ENCODE measurements at regions of chr16 and their contacts with region 1.

Region 1: GRCh38 chr16:66588981-66589713 is 9.9 kb downstream of the CMTM2 start:
- DNase-seq: peak; percentile 81
- CTCF ChIP-seq: peak; percentile 98

Region 2: DNA sequence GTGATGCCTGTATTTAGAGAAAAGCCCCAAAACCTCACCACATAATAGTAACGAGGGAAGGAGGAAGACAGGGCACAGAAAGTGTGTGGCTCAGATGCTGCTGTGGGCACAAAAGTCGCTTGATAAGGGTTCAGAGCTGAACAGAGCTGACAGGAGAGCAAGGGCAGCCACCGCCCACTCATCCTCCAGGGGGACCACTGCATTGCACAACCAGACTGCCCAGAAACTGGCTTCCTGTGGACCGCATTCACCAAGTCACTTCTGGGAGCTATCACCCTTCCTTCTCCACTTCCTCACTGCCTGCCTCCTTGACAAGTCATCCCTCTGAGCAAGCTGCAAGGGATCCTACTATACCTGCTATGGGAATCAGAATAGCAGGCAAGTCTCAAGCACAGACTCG is 954.9 kb before region 1 on chr16:
- CTCF ChIA-PET with region 1: no interaction called
- POLR2A ChIA-PET with region 1: no interaction called
- DNase-seq: no peak
- CTCF ChIP-seq: no peak

Region 3: DNA sequence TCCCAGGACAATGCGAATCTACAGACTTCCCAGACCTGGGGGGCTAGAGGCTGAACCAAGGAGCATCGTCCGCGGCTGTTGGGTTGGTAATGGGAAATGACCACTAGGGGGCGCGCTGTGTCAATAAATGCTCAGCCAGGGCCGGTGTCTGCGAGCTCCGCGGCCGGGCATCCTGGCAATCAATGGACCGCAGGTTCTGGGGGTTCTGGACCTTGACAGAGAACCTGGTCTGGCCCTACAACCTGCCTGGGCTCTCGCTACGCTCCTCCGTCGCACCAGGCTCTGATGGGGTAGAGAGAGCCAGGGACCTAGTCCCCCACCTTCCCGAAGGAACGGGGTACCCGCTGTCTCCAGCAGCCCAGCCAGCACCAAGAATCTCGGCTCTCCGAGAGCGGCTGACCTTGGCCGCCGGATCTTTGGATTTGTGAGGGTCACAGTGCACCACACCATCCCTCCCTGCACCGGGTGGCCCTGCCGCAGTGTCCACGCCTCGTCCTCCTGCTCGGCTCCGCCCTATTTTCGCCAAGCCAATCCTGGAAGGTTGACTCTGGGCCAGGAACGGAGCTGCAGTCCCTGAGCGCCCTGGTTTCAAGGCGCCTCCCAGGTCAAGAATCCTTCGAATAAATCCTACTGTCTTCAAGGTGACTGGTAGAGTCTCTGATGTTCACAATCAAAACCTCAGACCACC is 182.5 kb before region 1 on chr16:
- CTCF ChIA-PET with region 1: interaction called, 45 read pairs
- POLR2A ChIA-PET with region 1: no interaction called
- DNase-seq: peak; percentile 89
- CTCF ChIP-seq: peak; percentile 88

Region 4: GRCh38 chr16:66552286-66553177 is 36.6 kb before region 1 on chr16 and contains the start of gene CKLF:
- CTCF ChIA-PET with region 1: interaction called, 15 read pairs
- POLR2A ChIA-PET with region 1: no interaction called
- DNase-seq: peak; percentile 96
- CTCF ChIP-seq: no peak

Region 5: GRCh38 chr16:66569827-66570405 is 19.2 kb before region 1 on chr16:
- CTCF ChIA-PET with region 1: interaction called, 29 read pairs
- POLR2A ChIA-PET with region 1: no interaction called
- DNase-seq: no peak
- CTCF ChIP-seq: no peak

Region 6: GRCh38 chr16:66758086-66758485 is 168.9 kb after region 1 on chr16:
- CTCF ChIA-PET with region 1: no interaction called
- POLR2A ChIA-PET with region 1: no interaction called
- DNase-seq: no peak
- CTCF ChIP-seq: no peak